Transverse colon (tissue), 4 donors: ENCODE measurements at regions of chr4 and their contacts with region 1.

Region 1: DNA sequence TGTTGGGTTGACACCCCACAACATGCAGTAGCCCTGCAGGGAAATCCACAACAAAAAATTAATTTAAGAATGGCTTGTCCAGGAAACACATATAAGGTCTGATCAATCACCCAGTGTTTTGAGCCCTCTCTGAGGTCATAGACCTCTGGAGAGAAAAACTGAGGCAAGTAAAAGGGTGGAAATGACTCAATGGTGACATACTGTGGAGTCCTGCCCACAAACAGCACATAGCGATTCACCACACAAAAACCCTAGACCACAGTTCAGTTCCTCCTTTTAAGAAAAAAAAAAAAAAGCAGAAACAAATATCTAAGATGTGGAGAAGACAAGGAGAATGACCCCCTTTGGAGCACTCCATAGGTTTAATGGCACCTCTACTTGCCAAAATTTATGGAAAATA is 2691.0 kb downstream of the PCDH7 start:
- DNase-seq: no peak
- H3K4me3 ChIP-seq: no peak overlapping the region
- H3K27ac ChIP-seq: no peak overlapping the region
- H3K4me1 ChIP-seq: no peaks in the 10 kb centered on the region
- H3K27me3 ChIP-seq: no peaks in the 10 kb centered on the region
- CTCF ChIP-seq: no peak
- EP300 ChIP-seq: no peak
- POLR2A ChIP-seq: no peak

Region 2: GRCh38 chr4:33334416-33334815 is 76.8 kb before region 1 on chr4:
- in situ Hi-C with region 1: no loop called
- intact Hi-C with region 1: no loop called
- DNase-seq: no peak
- H3K4me3 ChIP-seq: no peak overlapping the region
- H3K27ac ChIP-seq: no peak overlapping the region
- H3K4me1 ChIP-seq: no peaks in the 10 kb centered on the region
- H3K27me3 ChIP-seq: no peaks in the 10 kb centered on the region
- CTCF ChIP-seq: no peak
- EP300 ChIP-seq: no peak
- POLR2A ChIP-seq: no peak

Region 3: DNA sequence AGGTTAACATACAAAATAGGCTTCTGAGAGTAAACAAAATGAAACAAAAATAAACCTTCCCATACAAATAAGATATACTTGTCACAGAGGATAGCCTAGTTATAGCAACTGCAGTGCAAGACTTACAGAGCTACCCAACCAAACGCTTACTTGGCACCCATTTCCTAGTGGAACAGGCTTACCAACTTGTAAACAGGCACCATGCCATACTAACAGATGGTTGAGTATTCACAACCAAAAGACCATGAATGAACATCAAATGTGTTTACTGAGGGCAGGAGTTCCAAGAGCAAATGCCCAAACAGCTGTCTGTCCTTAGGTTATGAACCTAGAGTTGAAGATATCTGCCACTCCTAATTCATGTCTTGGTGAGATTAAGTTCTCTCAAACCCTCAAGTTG is 61.8 kb before region 1 on chr4:
- in situ Hi-C with region 1: loop called in 1 of 4 experiments (anchors 10 kb)
- intact Hi-C with region 1: no loop called
- DNase-seq: no peak
- H3K4me3 ChIP-seq: no peak overlapping the region
- H3K27ac ChIP-seq: no peak overlapping the region
- H3K4me1 ChIP-seq: no peaks in the 10 kb centered on the region
- H3K27me3 ChIP-seq: no peaks in the 10 kb centered on the region
- CTCF ChIP-seq: no peak
- EP300 ChIP-seq: no peak
- POLR2A ChIP-seq: no peak

Region 4: DNA sequence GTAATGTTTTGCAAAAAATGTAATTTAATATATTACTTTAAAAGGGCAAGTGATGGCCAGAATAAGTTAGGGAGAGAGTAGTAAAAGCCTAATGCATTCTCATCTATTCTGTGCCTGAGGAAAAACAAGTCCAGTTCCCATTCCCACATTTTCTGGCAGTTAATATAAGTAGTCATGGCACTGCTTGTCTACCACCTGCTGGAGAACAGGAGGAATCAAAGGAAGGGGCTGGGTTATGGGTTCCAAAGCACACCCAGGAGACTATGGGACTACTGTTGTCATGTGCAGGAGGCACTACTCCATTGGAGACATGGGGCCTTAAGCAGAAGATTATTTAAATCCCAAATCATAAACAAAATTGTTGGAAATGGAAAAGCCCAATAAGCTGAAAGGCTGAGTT is 214.6 kb after region 1 on chr4:
- in situ Hi-C with region 1: no loop called
- intact Hi-C with region 1: no loop called
- DNase-seq: no peak
- H3K4me3 ChIP-seq: no peak overlapping the region
- H3K27ac ChIP-seq: no peak overlapping the region
- H3K4me1 ChIP-seq: no peaks in the 10 kb centered on the region
- H3K27me3 ChIP-seq: no peaks in the 10 kb centered on the region
- CTCF ChIP-seq: no peak
- EP300 ChIP-seq: no peak
- POLR2A ChIP-seq: no peak

Region 5: DNA sequence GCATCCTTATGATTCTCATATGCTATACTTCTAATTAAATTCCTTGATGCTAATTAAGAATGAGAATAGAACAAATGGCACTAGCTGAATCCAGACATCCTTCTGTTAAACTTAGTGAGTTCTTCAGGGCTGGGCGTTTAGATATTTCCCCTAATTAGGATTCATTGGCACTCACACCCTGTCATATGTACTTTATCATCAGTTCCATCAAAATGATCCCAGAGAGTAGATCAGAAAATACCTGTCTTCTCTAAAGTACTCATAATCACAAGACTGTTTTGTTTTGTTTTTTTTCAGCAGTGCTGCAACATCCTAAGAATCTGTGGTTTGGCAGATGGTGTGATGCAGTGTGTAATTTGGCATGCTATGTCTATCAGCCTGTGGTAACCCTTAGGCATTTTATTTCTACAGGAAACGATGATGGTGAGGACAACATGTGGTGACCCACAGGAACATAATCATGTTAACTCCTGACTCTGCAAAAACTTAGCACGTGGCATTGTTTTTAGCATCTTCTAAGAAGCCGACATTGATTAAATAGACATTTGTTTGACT is 304.7 kb after region 1 on chr4:
- in situ Hi-C with region 1: no loop called
- intact Hi-C with region 1: no loop called
- DNase-seq: no peak
- H3K4me3 ChIP-seq: no peak overlapping the region
- H3K27ac ChIP-seq: no peak overlapping the region
- H3K4me1 ChIP-seq: no peaks in the 10 kb centered on the region
- H3K27me3 ChIP-seq: no peaks in the 10 kb centered on the region
- CTCF ChIP-seq: no peak
- EP300 ChIP-seq: no peak
- POLR2A ChIP-seq: no peak

Region 6: DNA sequence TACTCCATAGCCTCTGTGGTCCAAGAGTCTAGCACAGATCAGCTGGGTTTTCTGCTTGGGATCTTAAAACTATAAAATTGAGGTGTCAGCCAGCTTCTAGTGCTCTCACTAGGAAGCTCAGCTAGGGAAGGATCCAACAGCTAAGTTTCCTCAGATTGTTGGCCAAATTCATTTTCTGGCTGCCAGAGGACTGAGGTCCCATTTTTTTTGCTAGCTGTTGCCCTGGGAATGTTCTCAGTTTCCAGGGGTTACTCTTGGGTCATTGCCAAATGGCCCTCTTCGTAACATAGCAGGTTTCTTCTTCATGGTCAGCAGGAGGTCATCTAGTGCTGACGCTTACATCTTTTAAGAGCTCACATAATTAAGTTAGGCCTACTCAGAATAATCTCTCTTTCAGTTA is 654.9 kb after region 1 on chr4:
- in situ Hi-C with region 1: no loop called
- intact Hi-C with region 1: loop called (anchors 10 kb)
- DNase-seq: no peak
- H3K4me3 ChIP-seq: no peak overlapping the region
- H3K27ac ChIP-seq: no peak overlapping the region
- H3K4me1 ChIP-seq: no peaks in the 10 kb centered on the region
- H3K27me3 ChIP-seq: no peaks in the 10 kb centered on the region
- CTCF ChIP-seq: no peak
- EP300 ChIP-seq: no peak
- POLR2A ChIP-seq: no peak